MCF 10A (cell line): ENCODE measurements at regions of chrX and their contacts with region 1.

Region 1: DNA sequence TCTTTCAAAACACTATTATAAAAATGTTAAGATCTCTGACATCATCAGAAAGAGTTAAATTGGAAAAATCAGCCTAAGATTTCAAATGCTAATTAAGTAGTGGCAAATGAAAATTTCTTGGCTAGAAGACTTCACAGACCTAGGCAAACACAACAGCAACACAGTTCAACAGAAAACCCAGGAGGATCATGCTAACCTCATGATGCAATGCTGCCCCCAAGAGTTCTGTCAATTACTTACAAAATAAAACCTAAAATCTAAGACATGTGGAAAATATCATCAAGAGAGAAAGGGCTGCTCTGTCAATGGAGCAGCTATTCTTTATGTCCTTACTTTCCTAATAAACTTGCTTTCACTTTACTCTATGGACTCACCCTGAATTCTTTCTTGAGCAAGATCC is 21.0 kb downstream of the S100G start:
- DNase-seq: peak; percentile 57
- H3K4me3 Mint-ChIP-seq: no peak overlapping the region
- H3K27ac Mint-ChIP-seq: no peak overlapping the region
- H3K4me1 Mint-ChIP-seq: no peaks in the 10 kb centered on the region
- H3K27me3 Mint-ChIP-seq: peaks cover 23% of the 10 kb centered on the region
- CTCF ChIP-seq: peak; percentile 45

Region 2: DNA sequence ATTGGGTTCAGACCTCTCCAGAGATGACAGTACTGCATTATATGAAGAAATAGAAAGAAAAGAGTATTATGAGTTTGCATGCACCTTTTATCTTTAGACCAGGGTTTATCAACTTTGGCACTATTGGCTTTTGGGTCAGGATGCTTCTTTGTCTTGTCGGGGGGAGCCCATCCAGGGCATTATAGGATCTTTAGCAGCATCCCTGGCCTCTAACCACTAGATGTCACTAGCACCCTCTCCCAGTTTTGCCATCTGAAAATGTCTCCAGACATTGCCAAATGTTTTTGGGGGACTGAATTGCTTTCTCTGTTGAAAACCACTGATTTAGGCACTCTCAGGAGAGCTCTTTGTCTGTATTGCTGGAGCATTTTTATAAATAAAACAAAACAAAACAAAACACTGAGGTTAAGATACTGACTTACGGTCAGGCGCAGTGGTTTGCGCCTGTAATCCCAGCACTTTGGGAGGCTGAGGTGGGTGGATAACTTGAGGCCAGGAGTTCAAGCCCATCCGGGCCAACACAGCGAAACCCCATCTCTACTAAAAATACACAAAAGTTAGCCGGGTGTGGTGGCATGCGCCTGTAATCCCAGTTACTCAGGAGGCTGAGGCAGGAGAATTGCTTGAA is 909.3 kb before region 1 on chrX:
- CTCF ChIA-PET with region 1: no interaction called
- POLR2A ChIA-PET with region 1: no interaction called
- intact Hi-C with region 1: loop called (anchors 10 kb)
- DNase-seq: peak; percentile 54
- H3K4me3 Mint-ChIP-seq: no peak overlapping the region
- H3K27ac Mint-ChIP-seq: no peak overlapping the region
- H3K4me1 Mint-ChIP-seq: no peaks in the 10 kb centered on the region
- H3K27me3 Mint-ChIP-seq: no peaks in the 10 kb centered on the region
- CTCF ChIP-seq: peak; percentile 63

Region 3: DNA sequence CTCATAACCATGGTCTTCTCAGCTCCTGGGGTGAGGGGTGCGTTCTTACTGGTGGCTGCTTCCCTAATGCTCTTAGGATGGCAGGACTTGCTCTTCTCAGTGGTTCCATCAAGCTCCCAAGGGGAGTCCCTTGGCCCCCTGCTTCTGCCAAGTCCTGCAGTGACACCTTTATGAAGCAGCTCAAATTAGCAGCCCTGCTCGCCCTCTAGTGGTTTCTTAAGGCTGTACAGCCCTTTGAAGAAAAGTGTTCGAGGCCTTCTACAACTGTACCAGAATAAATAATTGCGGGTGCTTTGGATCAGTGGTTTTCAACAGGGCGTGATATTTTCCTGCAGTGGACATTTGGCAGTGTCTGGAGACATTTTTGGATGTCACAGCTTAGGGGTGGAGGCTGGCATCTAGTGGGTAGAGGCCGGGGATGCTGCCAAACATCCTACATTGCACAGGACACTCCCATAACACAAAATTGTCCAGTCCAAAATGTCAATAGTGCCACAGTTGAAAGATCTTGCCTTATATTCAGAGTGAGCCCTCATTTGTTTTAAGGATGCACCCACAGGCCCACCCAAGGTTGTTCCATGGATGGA is 225.7 kb before region 1 on chrX:
- CTCF ChIA-PET with region 1: interaction called, 19 read pairs
- POLR2A ChIA-PET with region 1: no interaction called
- intact Hi-C with region 1: no loop called
- DNase-seq: peak; percentile 70
- H3K4me3 Mint-ChIP-seq: no peak overlapping the region
- H3K27ac Mint-ChIP-seq: no peak overlapping the region
- H3K4me1 Mint-ChIP-seq: no peaks in the 10 kb centered on the region
- H3K27me3 Mint-ChIP-seq: peaks cover 45% of the 10 kb centered on the region
- CTCF ChIP-seq: peak; percentile 84

Region 4: DNA sequence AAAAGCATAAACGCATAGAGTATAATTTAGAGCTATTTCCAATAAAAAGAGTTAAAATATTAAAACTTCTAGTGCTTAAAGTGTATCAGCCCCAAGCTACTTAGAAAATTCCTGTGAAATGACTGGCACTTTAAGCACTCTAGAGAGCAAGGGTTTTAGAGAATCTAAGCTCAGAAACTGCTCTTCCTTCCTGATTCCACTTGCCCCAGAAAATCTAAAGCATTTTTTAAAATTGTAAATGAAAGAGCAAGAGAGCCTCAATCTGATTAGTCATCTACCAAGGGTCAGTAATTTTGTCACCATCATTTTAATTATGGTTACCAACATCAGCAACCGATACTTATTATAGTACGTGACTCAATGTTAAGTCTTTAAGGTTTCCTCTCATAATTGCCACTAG is 16.5 kb after region 1 on chrX:
- CTCF ChIA-PET with region 1: interaction called, 10 read pairs
- POLR2A ChIA-PET with region 1: no interaction called
- intact Hi-C with region 1: no loop called
- DNase-seq: no peak
- H3K4me3 Mint-ChIP-seq: no peak overlapping the region
- H3K27ac Mint-ChIP-seq: no peak overlapping the region
- H3K4me1 Mint-ChIP-seq: no peaks in the 10 kb centered on the region
- H3K27me3 Mint-ChIP-seq: peaks cover 32% of the 10 kb centered on the region
- CTCF ChIP-seq: no peak

Region 5: DNA sequence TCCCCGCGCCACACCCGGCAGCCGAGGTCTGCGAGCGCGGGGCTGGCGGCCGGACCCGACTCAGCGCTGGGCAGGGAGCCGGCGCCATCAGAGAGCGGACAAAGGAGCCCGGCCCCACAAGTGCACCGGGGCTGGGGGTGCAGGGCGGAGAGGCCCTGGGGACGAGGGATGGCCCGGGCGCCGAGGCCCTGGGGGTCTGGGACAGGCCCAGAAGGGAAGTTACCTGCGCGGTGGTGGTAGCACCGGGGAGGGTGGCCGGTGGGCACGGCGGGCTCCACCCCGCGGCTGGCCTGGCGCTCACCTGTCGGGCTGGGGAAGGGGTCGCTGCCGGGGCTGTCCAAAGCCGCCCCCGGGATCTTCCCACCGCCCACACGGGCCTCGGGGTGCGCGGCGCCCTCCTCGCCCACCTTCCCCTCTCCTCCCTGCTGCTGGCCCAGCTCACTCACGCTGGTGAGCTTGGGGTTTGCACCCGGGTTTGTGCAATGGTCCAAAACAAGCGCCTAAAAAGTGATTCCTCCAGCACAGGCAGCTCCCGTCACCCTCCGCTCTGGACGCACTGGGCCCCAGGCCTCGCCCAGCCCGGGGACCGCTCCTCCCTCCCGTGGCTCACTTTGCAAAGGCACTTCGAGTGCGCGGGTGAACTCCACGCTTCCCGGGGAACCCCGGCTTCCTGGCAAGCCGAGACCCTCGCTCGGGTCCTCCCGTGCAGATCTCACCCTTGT is 41.3 kb after region 1 on chrX and contains the start of gene CTPS2:
- CTCF ChIA-PET with region 1: no interaction called
- POLR2A ChIA-PET with region 1: no interaction called
- intact Hi-C with region 1: no loop called
- DNase-seq: peak; percentile 67
- H3K4me3 Mint-ChIP-seq: peak within 1 kb of the TSS; percentile 86
- H3K27ac Mint-ChIP-seq: peak within 1 kb of the TSS; percentile 63
- H3K4me1 Mint-ChIP-seq: no peaks in the 10 kb centered on the region
- H3K27me3 Mint-ChIP-seq: peaks cover 45% of the 10 kb centered on the region
- CTCF ChIP-seq: no peak
- total RNA-seq, gene CTPS2: 5.3 and 5.5 TPM in 2 replicates